Sigmoid colon (tissue), 7 donors: ENCODE measurements at regions of chr1 and their contacts with region 1.

Region 1: GRCh38 chr1:71049951-71050598 is 2.5 kb upstream of the PTGER3 start:
- DNase-seq: no peak
- H3K4me3 ChIP-seq: no peak overlapping the region
- H3K27ac ChIP-seq: no peak overlapping the region
- H3K4me1 ChIP-seq: peaks cover 0 to 26% (median 18%) of the 10 kb centered on the region in 4 donors
- H3K27me3 ChIP-seq: peaks cover 3 to 18% (median 6%) of the 10 kb centered on the region in 3 donors
- CTCF ChIP-seq: peak; percentile 50 to 82 (median 67)
- EP300 ChIP-seq: no peak
- POLR2A ChIP-seq: no peak

Region 2: GRCh38 chr1:70382682-70383081 is 667.4 kb before region 1 on chr1:
- intact Hi-C with region 1: no loop called
- DNase-seq: no peak
- H3K4me3 ChIP-seq: no peak overlapping the region
- H3K27ac ChIP-seq: no peak overlapping the region
- H3K4me1 ChIP-seq: no peaks in the 10 kb centered on the region
- H3K27me3 ChIP-seq: no peaks in the 10 kb centered on the region
- CTCF ChIP-seq: no peak
- EP300 ChIP-seq: no peak
- POLR2A ChIP-seq: no peak

Region 3: GRCh38 chr1:70436622-70437251 is 613.3 kb before region 1 on chr1:
- intact Hi-C with region 1: loop called (anchors 5 kb)
- DNase-seq: no peak
- H3K4me3 ChIP-seq: no peak overlapping the region
- H3K27ac ChIP-seq: peak overlapping the region in 3 of 4 donors; percentile 10 to 49 (median 23)
- H3K4me1 ChIP-seq: no peaks in the 10 kb centered on the region
- H3K27me3 ChIP-seq: no peaks in the 10 kb centered on the region
- CTCF ChIP-seq: peak in 2 of 4 experiments; percentile 39 to 40
- EP300 ChIP-seq: no peak
- POLR2A ChIP-seq: no peak

Region 4: GRCh38 chr1:70528590-70529333 is 521.3 kb before region 1 on chr1:
- intact Hi-C with region 1: loop called (anchors 2 kb)
- DNase-seq: no peak
- H3K4me3 ChIP-seq: no peak overlapping the region
- H3K27ac ChIP-seq: no peak overlapping the region
- H3K4me1 ChIP-seq: peaks cover 0 to 5% (median 0%) of the 10 kb centered on the region in 4 donors
- H3K27me3 ChIP-seq: no peaks in the 10 kb centered on the region
- CTCF ChIP-seq: peak in 3 of 4 experiments; percentile 28 to 60 (median 40)
- EP300 ChIP-seq: no peak
- POLR2A ChIP-seq: no peak

Region 5: DNA sequence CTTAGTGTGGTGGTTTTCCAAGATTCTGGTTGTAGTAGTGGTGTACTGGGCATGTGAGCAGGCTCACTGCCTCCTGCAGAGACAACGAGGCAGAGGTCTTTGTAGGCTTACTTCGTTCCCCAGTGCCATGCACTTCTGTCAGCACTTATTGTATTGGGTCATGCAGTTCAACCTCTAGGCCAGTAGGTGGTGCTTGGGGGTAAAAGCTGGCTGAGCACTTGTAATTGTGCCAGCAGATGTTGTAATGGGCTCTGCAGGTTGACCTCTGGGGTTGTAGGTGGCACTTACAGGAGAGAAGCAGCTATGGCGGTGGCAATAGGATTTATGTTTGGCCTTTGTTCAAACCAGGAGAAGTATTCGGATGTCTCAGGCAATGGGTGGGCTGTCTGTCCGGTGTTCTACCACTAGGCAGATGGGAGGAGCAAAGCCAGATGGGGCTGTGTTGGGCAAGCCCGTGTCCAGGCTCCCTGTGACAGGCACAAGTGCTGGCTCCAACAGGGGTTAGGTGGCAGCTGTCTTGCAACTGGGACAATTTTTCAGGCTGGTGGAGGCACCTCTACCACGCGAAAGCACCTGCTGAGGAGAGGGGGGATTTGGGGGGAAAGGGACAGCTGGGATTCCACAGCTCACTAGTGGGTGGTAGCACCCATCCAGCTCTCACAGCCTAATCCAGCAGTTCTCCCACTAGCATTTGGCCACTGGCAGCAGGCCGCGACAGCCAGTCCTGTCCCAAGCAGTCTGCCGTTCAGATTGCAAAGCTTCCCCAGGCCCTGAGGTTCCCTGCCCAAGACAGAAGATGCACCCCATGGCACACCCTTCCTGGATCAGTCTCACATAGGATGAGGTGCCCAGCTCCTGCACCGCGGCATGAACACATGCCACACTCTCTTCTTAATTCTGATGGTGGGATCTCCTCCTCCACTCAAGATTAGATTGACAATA is 364.5 kb before region 1 on chr1:
- intact Hi-C with region 1: loop called (anchors 1 kb)
- DNase-seq: peak; percentile 83
- H3K4me3 ChIP-seq: no peak overlapping the region
- H3K27ac ChIP-seq: no peak overlapping the region
- H3K4me1 ChIP-seq: no peaks in the 10 kb centered on the region
- H3K27me3 ChIP-seq: no peaks in the 10 kb centered on the region
- CTCF ChIP-seq: peak; percentile 62 to 94 (median 84)
- EP300 ChIP-seq: peak in 1 of 4 donors; percentile 2
- POLR2A ChIP-seq: no peak

Region 6: DNA sequence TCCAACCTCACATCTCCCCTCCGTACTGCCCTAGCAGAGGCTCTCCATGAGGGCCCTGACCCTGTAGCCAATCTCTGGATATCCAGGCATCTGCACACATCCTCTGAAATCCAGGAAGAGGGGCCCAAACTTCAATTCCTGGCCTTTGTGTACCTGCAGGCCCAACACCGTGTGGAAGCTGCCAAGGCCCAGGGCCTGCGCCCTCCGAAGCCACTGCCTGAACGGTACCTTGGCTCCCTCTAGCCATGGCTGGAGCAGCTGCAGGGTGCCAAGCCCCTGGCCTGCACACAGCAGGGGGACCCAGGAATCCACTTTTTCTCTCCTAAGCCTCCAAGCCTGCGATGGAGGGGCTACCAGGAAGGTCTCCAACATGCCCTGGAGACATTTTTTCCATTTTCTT is 86.7 kb before region 1 on chr1:
- intact Hi-C with region 1: loop called (anchors 10 kb)
- DNase-seq: no peak
- H3K4me3 ChIP-seq: no peak overlapping the region
- H3K27ac ChIP-seq: no peak overlapping the region
- H3K4me1 ChIP-seq: no peaks in the 10 kb centered on the region
- H3K27me3 ChIP-seq: no peaks in the 10 kb centered on the region
- CTCF ChIP-seq: no peak
- EP300 ChIP-seq: no peak
- POLR2A ChIP-seq: no peak